Left cardiac atrium (tissue), 4 donors: ENCODE measurements at regions of chr22 and their contacts with region 1.

Region 1: GRCh38 chr22:40220316-40221054 is 42.8 kb downstream of the TNRC6B start:
- DNase-seq: no peak
- ATAC-seq: peak in 1 of 2 donors; percentile 48

Region 2: DNA sequence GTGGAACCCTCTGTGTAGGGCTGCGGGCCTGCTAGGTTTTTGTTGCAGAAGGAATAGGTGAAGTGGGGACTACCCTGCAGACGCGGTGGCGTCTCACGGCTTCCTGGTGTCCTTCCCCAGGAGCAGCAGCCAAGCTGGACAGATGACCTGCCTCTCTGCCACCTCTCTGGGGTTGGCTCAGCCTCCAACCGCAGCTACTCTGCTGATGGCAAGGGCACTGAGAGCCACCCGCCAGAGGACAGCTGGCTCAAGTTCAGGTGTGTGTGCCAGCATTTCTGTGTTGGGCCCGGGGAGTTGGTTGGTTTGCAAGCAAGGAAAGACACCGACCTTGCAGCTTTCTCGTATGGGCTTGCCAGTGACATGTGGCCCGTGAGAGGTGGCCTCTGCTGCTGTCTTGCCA is 805.6 kb before region 1 on chr22:
- intact Hi-C with region 1: no loop called
- DNase-seq: no peak
- ATAC-seq: peak; percentile 87 to 89

Region 3: DNA sequence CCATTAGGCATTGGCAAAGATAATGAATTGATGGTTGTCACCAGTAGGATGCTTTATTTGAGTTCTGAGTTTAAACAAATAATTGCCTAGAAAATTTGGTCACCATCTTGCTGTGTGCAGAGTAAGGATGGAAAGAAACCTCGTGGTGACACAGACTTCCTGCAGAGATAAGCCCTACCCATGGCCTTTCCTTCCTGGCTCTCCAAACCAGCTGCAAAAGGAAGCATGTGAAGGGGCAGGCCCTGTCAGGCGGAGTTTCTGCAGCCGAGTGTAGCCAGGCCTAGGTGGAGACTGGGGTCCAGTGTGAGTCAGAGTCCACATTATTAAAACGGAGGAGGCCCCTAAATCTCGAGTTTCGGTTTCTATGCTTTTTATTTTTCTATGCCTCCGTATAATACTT is 42.7 kb after region 1 on chr22:
- intact Hi-C with region 1: loop called in 1 of 2 experiments (anchors 5 kb)
- DNase-seq: peak; percentile 71
- ATAC-seq: peak; percentile 53 to 82